Natural killer cell (primary cell): ENCODE measurements at regions of chr19 and their contacts with region 1.

Region 1: DNA sequence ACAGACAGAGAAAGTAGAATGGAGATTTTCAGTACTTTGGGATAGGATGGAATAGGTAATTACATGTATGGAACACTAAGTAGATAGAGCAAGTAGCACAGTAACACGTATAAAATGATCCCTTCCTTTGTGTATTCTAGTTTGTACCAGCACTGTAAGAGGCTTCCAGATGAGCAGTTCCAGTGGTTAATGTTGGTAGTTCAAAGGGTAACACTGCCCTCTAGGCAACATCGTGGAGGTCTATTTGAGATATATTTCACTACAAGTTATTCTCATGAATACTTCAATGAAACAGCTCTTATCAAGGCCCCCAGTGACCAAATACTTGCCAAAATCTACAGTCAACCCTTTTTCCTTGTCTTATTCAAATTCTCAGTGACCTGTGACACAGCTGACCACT is 13.5 kb upstream of the ZNF563 start:
- DNase-seq: peak in 1 of 2 donors; percentile 70
- ATAC-seq: peak; percentile 48 to 67 (median 66)
- H3K4me3 ChIP-seq: no peak overlapping the region
- H3K4me3 Mint-ChIP-seq: no peak overlapping the region
- H3K27ac ChIP-seq: no peak overlapping the region
- H3K27ac Mint-ChIP-seq: no peak overlapping the region
- H3K4me1 ChIP-seq: no peaks in the 10 kb centered on the region
- H3K4me1 Mint-ChIP-seq: no peaks in the 10 kb centered on the region
- H3K27me3 ChIP-seq: no peaks in the 10 kb centered on the region
- H3K27me3 Mint-ChIP-seq: no peaks in the 10 kb centered on the region
- CTCF ChIP-seq: peak; percentile 29

Region 2: DNA sequence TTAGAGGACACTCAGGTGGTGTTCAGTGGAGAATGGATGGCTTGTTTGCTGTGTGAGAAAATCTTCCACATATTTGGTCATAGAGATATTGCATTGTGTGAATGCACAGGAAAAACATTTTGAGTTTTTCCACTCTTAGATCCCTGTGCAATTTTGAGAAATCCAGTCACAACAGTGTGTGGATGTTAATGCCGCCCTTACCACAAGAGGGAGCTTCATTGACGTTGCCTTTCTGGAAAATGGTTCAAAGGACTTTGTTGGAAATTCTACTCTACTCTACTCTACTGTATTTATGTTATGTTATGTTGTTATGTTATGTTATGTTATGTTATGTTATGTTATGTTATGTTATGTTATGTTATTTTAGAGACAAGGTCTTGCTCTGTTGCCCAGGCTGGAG is 220.2 kb before region 1 on chr19:
- intact Hi-C with region 1: loop called (anchors 1 kb)
- DNase-seq: peak in 1 of 2 donors; percentile 48
- ATAC-seq: peak in 1 of 3 donors; percentile 41
- H3K4me3 ChIP-seq: no peak overlapping the region
- H3K4me3 Mint-ChIP-seq: no peak overlapping the region
- H3K27ac ChIP-seq: no peak overlapping the region
- H3K27ac Mint-ChIP-seq: no peak overlapping the region
- H3K4me1 ChIP-seq: no peaks in the 10 kb centered on the region
- H3K4me1 Mint-ChIP-seq: no peaks in the 10 kb centered on the region
- H3K27me3 ChIP-seq: no peaks in the 10 kb centered on the region
- H3K27me3 Mint-ChIP-seq: no peaks in the 10 kb centered on the region
- CTCF ChIP-seq: peak; percentile 31

Region 3: GRCh38 chr19:12202250-12202649 is 144.6 kb before region 1 on chr19:
- intact Hi-C with region 1: loop called (anchors 2 kb)
- DNase-seq: peak; percentile 38 to 74
- ATAC-seq: peak; percentile 54 to 73 (median 71)
- H3K4me3 ChIP-seq: no peak overlapping the region
- H3K4me3 Mint-ChIP-seq: no peak overlapping the region
- H3K27ac ChIP-seq: no peak overlapping the region
- H3K27ac Mint-ChIP-seq: peak overlapping the region in 1 of 2 donors; percentile 31
- H3K4me1 ChIP-seq: peaks cover 6% of the 10 kb centered on the region
- H3K4me1 Mint-ChIP-seq: peaks cover 29 to 31% of the 10 kb centered on the region in 2 donors
- H3K27me3 ChIP-seq: no peaks in the 10 kb centered on the region
- H3K27me3 Mint-ChIP-seq: no peaks in the 10 kb centered on the region
- CTCF ChIP-seq: no peak

Region 4: DNA sequence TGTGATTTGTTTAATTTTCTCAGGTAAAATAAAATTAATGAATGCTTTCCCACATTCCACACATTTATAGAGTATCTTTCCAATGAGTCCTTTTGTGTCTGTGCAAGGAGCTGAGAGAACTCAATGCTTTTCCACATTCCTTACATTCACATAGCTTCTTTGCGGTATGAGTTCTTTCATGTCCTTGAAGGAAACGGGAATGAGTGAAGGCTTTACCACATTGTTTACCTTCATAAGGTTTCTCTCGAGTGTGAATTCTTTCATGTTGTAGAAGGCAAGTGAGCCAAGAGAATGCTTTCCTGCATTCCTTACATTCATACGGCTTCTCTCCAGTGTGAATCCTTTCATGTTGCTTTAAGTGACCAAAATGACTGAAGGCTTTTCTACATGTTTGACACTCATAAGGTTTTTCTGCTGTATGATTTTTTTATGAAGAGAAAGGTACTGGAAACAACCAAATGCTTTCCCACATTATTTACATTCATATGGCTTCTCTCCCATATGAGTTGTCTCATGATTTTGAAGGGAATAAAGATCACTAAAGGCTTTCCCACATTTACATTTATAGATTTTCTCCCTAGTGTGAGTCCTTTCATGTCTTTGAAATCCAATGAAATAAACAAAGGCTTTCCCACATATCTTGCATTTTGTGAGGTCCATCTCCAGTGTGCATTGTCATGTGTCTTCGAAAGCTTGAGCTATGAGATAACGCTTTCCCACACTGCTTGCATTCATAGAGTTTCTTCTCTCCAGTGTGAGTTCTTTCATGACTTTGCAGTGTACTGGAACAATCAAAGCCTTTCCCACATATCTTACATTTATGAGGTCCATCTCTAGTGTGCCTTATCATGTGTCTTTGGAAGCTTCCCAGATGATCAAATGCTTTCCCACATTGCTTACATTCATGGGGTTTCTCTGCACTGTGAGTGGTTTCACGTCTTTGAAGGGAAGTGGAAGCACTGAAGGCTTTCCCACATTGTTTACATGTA is 33.1 kb after region 1 on chr19:
- intact Hi-C with region 1: no loop called
- DNase-seq: no peak
- ATAC-seq: no peak
- H3K4me3 ChIP-seq: no peak overlapping the region
- H3K4me3 Mint-ChIP-seq: no peak overlapping the region
- H3K27ac ChIP-seq: no peak overlapping the region
- H3K27ac Mint-ChIP-seq: no peak overlapping the region
- H3K4me1 ChIP-seq: no peaks in the 10 kb centered on the region
- H3K4me1 Mint-ChIP-seq: no peaks in the 10 kb centered on the region
- H3K27me3 ChIP-seq: no peaks in the 10 kb centered on the region
- H3K27me3 Mint-ChIP-seq: no peaks in the 10 kb centered on the region
- CTCF ChIP-seq: no peak